ENCODE measurements at regions of chr22 and their contacts with region 1.

Region 1: DNA sequence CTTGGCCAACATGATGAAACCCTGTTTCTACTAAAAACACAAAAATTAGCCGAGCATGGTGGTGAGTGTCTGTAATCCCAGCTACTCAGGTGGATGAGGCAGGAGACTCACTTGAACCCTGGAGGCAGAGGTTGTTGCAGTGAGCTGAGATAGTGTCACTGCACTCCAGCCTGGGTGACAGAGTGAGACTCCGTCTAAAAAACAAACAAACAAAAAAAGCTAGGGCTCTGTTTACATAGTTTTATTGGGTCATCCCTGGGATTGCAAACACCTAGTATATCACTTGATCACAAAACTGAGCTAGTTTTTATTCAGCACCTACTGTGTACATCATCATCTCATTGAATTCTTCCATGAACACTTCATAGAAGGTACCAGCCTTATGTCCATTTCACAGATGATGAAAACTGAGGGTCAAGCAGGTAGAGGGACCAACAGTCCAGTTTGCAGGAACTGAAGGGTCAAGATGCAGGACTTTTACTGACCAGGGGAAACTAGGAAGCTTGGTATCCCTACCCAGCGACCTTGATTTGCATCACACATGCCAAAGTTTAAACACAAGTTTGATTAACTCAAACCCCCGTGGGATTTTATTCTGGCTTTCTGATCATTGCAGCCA is 9.2 kb upstream of the MRTFA start:
- DNase-seq: no peak
- ATAC-seq: no peak

Region 2: GRCh38 chr22:40436505-40437451 is 208.9 kb before region 1 on chr22:
- intact Hi-C with region 1: loop called (anchors 2 kb)
- DNase-seq: peak; percentile 52
- ATAC-seq: peak; percentile 81